ENCODE measurements at regions of chr2 and their contacts with region 1.

Region 1: GRCh38 chr2:102604746-102605145 is 14.6 kb upstream of the SLC9A2 start:
- DNase-seq: no peak
- H3K4me3 ChIP-seq: no peak overlapping the region
- CTCF ChIP-seq: no peak

Region 2: DNA sequence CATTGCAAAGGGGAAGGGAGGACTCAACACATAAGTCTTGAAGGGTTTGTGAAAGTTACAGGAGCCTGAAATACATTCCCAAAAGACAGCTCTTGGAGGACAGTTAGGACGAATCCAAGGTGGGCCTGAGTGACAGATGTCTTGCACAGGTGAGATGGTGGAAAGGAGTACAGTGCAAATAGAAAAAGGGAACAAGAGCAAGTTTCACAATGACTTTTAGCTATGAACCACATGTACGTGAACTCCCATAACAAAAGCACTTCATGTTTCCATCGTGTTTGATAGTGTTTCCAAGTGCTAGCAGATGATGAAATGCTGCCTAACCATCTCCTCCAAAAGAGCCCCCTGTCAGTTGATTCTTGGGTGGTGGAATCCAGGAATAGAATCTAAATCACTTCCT is 180.0 kb before region 1 on chr2:
- CTCF ChIA-PET with region 1: no interaction called
- POLR2A ChIA-PET with region 1: no interaction called
- DNase-seq: no peak
- H3K4me3 ChIP-seq: no peak overlapping the region
- CTCF ChIP-seq: no peak

Region 3: DNA sequence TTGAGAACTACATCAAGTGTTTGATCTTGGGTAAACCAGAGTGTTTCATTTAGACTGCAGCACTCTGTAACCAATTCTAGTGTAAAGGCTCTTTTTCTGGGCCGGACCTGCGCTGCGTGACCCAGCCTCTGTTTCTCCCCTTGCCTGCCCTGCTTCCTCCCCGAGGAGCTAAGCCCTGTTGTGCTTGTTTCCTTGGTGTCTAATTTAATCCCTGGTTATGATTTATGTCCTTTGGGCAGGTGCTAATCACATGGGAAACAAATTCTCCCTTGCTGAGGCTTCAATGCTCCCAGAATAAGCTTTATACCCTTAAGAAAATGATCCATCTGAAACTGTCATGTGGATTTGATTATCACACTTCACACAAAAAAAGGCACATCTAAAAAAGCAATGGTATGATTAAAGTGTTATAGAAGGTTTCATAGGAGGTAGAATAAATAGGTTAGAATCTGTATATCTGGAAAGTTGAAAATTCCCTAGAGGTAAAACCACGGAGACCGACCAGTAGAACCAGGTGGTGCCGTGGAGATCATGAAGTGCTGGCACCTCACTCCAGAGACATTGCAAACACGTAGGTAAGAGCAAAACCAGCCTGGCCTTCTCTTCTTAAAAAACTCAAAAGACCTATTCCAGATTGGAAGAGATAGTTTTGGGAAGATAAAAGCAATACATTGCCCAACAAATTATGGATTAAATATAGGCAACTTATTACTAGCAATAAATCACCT is 16.4 kb before region 1 on chr2:
- CTCF ChIA-PET with region 1: no interaction called
- POLR2A ChIA-PET with region 1: no interaction called
- DNase-seq: no peak
- H3K4me3 ChIP-seq: no peak overlapping the region
- CTCF ChIP-seq: no peak

Region 4: GRCh38 chr2:102615622-102616436 is 11.1 kb after region 1 on chr2:
- CTCF ChIA-PET with region 1: interaction called, 10 read pairs
- POLR2A ChIA-PET with region 1: no interaction called
- DNase-seq: peak; percentile 9
- H3K4me3 ChIP-seq: no peak overlapping the region
- CTCF ChIP-seq: peak; percentile 93

Measured in AG04449 (cell line).